CD8-positive, alpha-beta T cell (primary cell): ENCODE measurements at regions of chr1 and their contacts with region 1.

Region 1: DNA sequence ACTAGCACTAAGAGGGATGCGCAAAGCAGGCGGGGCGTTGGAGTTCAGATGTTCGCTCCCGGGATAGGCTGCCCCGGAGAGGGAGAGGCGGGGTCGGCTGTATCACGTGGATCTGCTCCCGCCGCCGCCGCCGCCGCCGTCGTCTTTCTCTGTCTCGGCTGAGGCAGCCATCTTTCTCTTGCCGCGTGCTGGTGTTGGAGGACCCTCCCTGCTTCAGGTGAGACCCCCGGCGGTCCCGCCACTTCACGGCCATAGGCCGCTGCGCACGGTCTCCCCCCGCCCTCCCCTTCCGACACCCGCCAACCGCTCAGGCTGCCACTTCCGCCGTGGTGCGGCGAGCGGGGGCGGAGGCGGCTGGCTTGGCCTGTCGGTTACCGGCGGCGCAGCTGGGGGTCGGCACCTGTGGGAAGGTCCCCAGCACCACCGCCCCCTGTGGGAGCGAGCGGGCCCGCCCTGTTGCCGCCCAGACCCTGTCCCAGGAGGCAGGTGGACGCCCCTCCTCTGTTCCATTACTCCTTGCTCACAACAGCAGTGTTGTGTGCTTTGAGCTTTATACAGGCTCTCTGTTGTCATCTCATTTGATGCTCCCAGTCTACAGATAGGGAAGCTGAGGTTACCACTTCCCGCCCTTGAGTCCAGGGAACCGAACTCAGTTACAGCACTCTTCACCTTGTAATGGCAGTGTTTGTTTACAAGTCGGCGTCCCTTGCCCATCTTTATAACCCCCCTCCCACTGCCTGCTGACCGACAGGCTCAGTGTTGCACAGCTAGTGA is at the start of gene BTF3L4:
- DNase-seq: peak; percentile 85 to 95 (median 92)
- ATAC-seq: peak; percentile 92
- H3K4me3 ChIP-seq: peak within 1 kb of the TSS; percentile 79 to 96
- H3K4me3 Mint-ChIP-seq: peak within 1 kb of the TSS; percentile 98
- H3K27ac ChIP-seq: peak within 1 kb of the TSS; percentile 74 to 85
- H3K27ac Mint-ChIP-seq: peak within 1 kb of the TSS; percentile 93
- H3K4me1 ChIP-seq: peaks cover 33% of the 10 kb centered on the region
- H3K4me1 Mint-ChIP-seq: peaks cover 70% of the 10 kb centered on the region
- H3K27me3 ChIP-seq: no peaks in the 10 kb centered on the region
- H3K27me3 Mint-ChIP-seq: no peaks in the 10 kb centered on the region
- CTCF ChIP-seq: no peak
- total RNA-seq, gene BTF3L4: 38.4 to 39.7 TPM

Region 2: GRCh38 chr1:51235673-51236530 is 820.4 kb before region 1 on chr1 and contains the start of gene RNF11:
- CTCF ChIA-PET with region 1: no interaction called
- POLR2A ChIA-PET with region 1: no interaction called
- intact Hi-C with region 1: loop called in 1 of 2 experiments (anchors 10 kb)
- DNase-seq: peak; percentile 86 to 97 (median 91)
- ATAC-seq: peak; percentile 92
- H3K4me3 ChIP-seq: peak within 1 kb of the TSS; percentile 79 to 90
- H3K4me3 Mint-ChIP-seq: peak within 1 kb of the TSS; percentile 98
- H3K27ac ChIP-seq: peak within 1 kb of the TSS; percentile 80 to 92
- H3K27ac Mint-ChIP-seq: peak within 1 kb of the TSS; percentile 99
- H3K4me1 ChIP-seq: peaks cover 37% of the 10 kb centered on the region
- H3K4me1 Mint-ChIP-seq: peaks cover 33% of the 10 kb centered on the region
- H3K27me3 ChIP-seq: no peaks in the 10 kb centered on the region
- H3K27me3 Mint-ChIP-seq: no peaks in the 10 kb centered on the region
- CTCF ChIP-seq: no peak
- total RNA-seq, gene RNF11: 95.9 to 103 TPM

Region 3: GRCh38 chr1:52033190-52034049 is 22.9 kb before region 1 on chr1 and contains the start of gene KTI12:
- CTCF ChIA-PET with region 1: no interaction called
- POLR2A ChIA-PET with region 1: interaction called, 33 read pairs
- intact Hi-C with region 1: loop called (anchors 1 kb)
- DNase-seq: peak; percentile 78 to 97 (median 88)
- ATAC-seq: peak; percentile 92
- H3K4me3 ChIP-seq: peak within 1 kb of the TSS; percentile 78 to 80
- H3K4me3 Mint-ChIP-seq: peak within 1 kb of the TSS; percentile 92
- H3K27ac ChIP-seq: peak within 1 kb of the TSS; percentile 88 to 89
- H3K27ac Mint-ChIP-seq: peak within 1 kb of the TSS; percentile 95
- H3K4me1 ChIP-seq: peaks cover 30% of the 10 kb centered on the region
- H3K4me1 Mint-ChIP-seq: peaks cover 38% of the 10 kb centered on the region
- H3K27me3 ChIP-seq: no peaks in the 10 kb centered on the region
- H3K27me3 Mint-ChIP-seq: no peaks in the 10 kb centered on the region
- CTCF ChIP-seq: no peak
- total RNA-seq, gene KTI12: 23.6 to 24.7 TPM

Region 4: GRCh38 chr1:52552505-52553361 is 496.4 kb after region 1 on chr1 and contains the start of gene TUT4:
- CTCF ChIA-PET with region 1: no interaction called
- POLR2A ChIA-PET with region 1: interaction called, 4 read pairs
- intact Hi-C with region 1: loop called in 1 of 2 experiments (anchors 10 kb)
- DNase-seq: peak; percentile 55 to 87 (median 73)
- ATAC-seq: peak; percentile 56
- H3K4me3 ChIP-seq: peak within 1 kb of the TSS; percentile 87 to 96
- H3K4me3 Mint-ChIP-seq: peak within 1 kb of the TSS; percentile 70
- H3K27ac ChIP-seq: peak within 1 kb of the TSS; percentile 92 to 96
- H3K27ac Mint-ChIP-seq: peak within 1 kb of the TSS; percentile 69
- H3K4me1 ChIP-seq: peaks cover 35% of the 10 kb centered on the region
- H3K4me1 Mint-ChIP-seq: peaks cover 40% of the 10 kb centered on the region
- H3K27me3 ChIP-seq: no peaks in the 10 kb centered on the region
- H3K27me3 Mint-ChIP-seq: no peaks in the 10 kb centered on the region
- CTCF ChIP-seq: peak; percentile 8
- total RNA-seq, gene TUT4: 133 to 134 TPM

Region 5: GRCh38 chr1:53014791-53015507 is 958.6 kb after region 1 on chr1:
- CTCF ChIA-PET with region 1: no interaction called
- POLR2A ChIA-PET with region 1: no interaction called
- intact Hi-C with region 1: loop called (anchors 2 to 10 kb)
- DNase-seq: peak; percentile 51 to 94 (median 79)
- ATAC-seq: peak; percentile 100
- H3K4me3 ChIP-seq: peak overlapping the region; percentile 67 to 68
- H3K4me3 Mint-ChIP-seq: peak overlapping the region; percentile 84
- H3K27ac ChIP-seq: peak overlapping the region; percentile 42 to 48
- H3K27ac Mint-ChIP-seq: peak overlapping the region; percentile 79
- H3K4me1 ChIP-seq: peaks cover 21% of the 10 kb centered on the region
- H3K4me1 Mint-ChIP-seq: peaks cover 38% of the 10 kb centered on the region
- H3K27me3 ChIP-seq: no peaks in the 10 kb centered on the region
- H3K27me3 Mint-ChIP-seq: no peaks in the 10 kb centered on the region
- CTCF ChIP-seq: no peak

Region 6: GRCh38 chr1:53945433-53946251 is 1889.3 kb after region 1 on chr1 and contains the start of gene IFT25:
- CTCF ChIA-PET with region 1: no interaction called
- POLR2A ChIA-PET with region 1: no interaction called
- intact Hi-C with region 1: loop called in 1 of 2 experiments (anchors 5 kb)
- DNase-seq: peak; percentile 96 to 100 (median 98)
- ATAC-seq: peak; percentile 81
- H3K4me3 ChIP-seq: peak within 1 kb of the TSS; percentile 81 to 94
- H3K4me3 Mint-ChIP-seq: peak within 1 kb of the TSS; percentile 98
- H3K27ac ChIP-seq: peak within 1 kb of the TSS; percentile 58 to 88
- H3K27ac Mint-ChIP-seq: peak within 1 kb of the TSS; percentile 96
- H3K4me1 ChIP-seq: peaks cover 27% of the 10 kb centered on the region
- H3K4me1 Mint-ChIP-seq: peaks cover 57% of the 10 kb centered on the region
- H3K27me3 ChIP-seq: no peaks in the 10 kb centered on the region
- H3K27me3 Mint-ChIP-seq: no peaks in the 10 kb centered on the region
- CTCF ChIP-seq: no peak
- total RNA-seq, gene IFT25: 12.8 to 13.1 TPM